Mammary epithelial cell (primary cell): ENCODE measurements at regions of chr1 and their contacts with region 1.

Region 1: DNA sequence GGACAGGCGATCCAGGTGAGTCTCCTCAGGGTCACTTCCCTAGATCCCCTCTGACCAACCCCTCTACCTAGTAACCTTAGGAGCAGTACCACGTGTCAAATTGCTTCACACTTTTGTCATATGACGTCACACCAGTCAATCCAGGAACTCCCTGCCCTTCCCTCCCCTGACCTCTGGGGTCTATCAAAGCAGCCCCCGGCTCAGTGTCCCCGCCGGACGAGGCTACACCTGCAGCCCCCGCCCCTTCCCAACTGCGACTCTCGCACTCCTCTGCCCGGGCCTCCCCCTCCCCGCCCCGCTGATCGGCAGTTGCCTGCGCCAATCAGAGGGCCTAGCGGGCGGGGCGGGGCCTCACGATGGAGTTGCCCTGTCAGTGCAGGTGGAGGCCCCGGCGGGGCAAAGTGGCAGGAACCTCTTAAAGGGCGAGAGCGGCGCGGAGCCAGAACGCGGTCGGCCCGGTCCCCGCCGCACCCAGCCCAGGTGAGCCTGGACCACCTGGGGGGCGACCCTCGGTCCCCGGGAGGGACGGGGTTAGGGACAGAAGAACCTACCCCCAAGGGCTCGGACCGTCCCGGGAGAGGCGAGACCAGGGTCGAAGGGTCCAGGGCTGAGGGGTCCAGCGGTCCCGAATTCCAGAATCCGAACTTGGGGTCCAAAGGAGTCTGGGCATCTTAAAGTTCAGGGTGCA is 27.5 kb upstream of the EPB41 start:
- DNase-seq: peak; percentile 86
- H3K4me3 ChIP-seq: peak overlapping the region; percentile 69 to 95 (median 78)
- H3K27ac ChIP-seq: peak overlapping the region; percentile 66
- H3K4me1 ChIP-seq: peaks cover 25% of the 10 kb centered on the region
- H3K27me3 ChIP-seq: no peaks in the 10 kb centered on the region
- CTCF ChIP-seq: no peak

Region 2: DNA sequence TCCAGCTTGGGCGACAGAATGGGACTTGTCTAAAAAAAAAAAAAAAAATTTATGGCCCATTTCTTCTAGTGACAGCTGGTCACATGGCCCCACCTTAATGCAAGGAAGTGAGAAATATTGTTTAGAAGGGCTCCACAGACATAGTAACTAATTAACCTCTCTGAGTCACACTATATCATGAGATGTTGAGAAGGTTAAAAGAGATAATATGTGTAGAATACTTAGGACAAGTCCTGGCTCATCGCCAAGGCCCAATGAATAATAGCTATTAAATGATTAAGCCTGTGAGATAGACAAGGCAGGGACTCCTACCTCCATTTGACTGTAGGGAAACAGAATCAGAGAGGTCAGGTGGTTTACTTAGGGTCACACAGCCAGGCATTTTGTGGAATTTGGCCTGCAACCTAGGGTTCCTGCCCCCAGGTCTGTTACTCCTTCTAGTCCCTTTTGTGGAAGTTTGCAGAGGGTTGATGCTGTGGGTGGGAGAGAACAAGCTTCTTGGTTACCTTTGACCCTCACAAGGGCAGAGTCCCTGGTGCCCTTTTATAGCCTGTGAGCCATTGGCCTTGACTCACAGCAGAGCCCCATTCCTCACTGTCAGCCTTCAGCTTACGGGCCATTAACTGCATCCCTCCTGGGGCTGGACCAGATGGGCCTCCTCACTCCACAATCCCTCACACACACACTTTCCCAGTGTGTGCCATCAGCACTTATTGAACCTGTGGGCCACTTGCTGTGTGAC is 26.4 kb before region 1 on chr1:
- CTCF ChIA-PET with region 1: no interaction called
- dilution Hi-C with region 1: no loop called
- in situ Hi-C with region 1: no loop called
- intact Hi-C with region 1: no loop called
- DNase-seq: peak; percentile 71
- H3K4me3 ChIP-seq: no peak overlapping the region
- H3K27ac ChIP-seq: no peak overlapping the region
- H3K4me1 ChIP-seq: no peaks in the 10 kb centered on the region
- H3K27me3 ChIP-seq: peaks cover 1% of the 10 kb centered on the region
- CTCF ChIP-seq: no peak

Region 3: GRCh38 chr1:28914228-28915030 is 27.6 kb after region 1 on chr1 and contains the start of gene EPB41:
- CTCF ChIA-PET with region 1: no interaction called
- dilution Hi-C with region 1: no loop called
- in situ Hi-C with region 1: no loop called
- intact Hi-C with region 1: loop called (anchors 1 kb)
- DNase-seq: peak; percentile 79
- H3K4me3 ChIP-seq: peak within 1 kb of the TSS; percentile 53 to 66 (median 64)
- H3K27ac ChIP-seq: peak within 1 kb of the TSS; percentile 38
- H3K4me1 ChIP-seq: peaks cover 6% of the 10 kb centered on the region
- H3K27me3 ChIP-seq: no peaks in the 10 kb centered on the region
- CTCF ChIP-seq: no peak
- total RNA-seq, gene EPB41: 20.6 to 23.7 TPM

Region 4: DNA sequence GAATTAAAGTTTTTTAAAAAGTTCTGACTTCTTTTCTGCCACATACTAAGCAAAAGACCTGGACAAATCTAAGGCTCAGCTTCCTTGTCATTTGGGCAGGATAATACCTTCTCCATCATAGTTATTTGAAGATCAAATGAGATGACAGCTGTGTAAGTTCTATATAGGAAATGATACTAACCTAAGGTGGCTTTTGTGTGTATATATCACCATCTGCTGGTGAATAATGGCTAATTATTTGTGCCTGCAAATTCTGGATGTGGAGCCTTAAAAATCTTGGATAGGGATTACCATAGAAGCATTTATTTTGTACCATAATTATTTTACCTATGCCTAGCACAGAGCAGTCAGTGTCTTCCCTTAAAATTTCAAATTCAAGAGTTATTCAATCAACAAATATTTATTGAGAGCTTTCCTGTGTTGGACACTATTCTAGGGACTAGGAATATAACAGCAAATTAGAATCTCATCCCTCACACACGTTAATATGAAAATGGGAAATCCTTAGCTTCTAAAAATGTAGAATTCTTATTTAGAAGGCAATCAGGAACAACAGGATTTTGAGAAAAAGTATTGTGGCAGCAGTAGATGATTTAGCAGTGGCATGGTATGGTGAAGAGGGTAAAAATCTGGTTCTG is 147.1 kb after region 1 on chr1:
- CTCF ChIA-PET with region 1: interaction called, 4 read pairs
- dilution Hi-C with region 1: no loop called
- in situ Hi-C with region 1: loop called (anchors 5 kb)
- intact Hi-C with region 1: loop called (anchors 1 kb)
- DNase-seq: peak; percentile 35
- H3K4me3 ChIP-seq: no peak overlapping the region
- H3K27ac ChIP-seq: no peak overlapping the region
- H3K4me1 ChIP-seq: no peaks in the 10 kb centered on the region
- H3K27me3 ChIP-seq: no peaks in the 10 kb centered on the region
- CTCF ChIP-seq: peak; percentile 58 to 65

Region 5: GRCh38 chr1:29197585-29197924 is 310.7 kb after region 1 on chr1:
- CTCF ChIA-PET with region 1: interaction called, 28 read pairs
- dilution Hi-C with region 1: no loop called
- in situ Hi-C with region 1: loop called (anchors 5 to 10 kb)
- intact Hi-C with region 1: loop called (anchors 1 kb)
- DNase-seq: peak; percentile 36
- H3K4me3 ChIP-seq: no peak overlapping the region
- H3K27ac ChIP-seq: no peak overlapping the region
- H3K4me1 ChIP-seq: peaks cover 26% of the 10 kb centered on the region
- H3K27me3 ChIP-seq: no peaks in the 10 kb centered on the region
- CTCF ChIP-seq: peak; percentile 66 to 71

Region 6: GRCh38 chr1:29245876-29246275 is 359.0 kb after region 1 on chr1:
- CTCF ChIA-PET with region 1: no interaction called
- dilution Hi-C with region 1: no loop called
- in situ Hi-C with region 1: no loop called
- intact Hi-C with region 1: no loop called
- DNase-seq: no peak
- H3K4me3 ChIP-seq: no peak overlapping the region
- H3K27ac ChIP-seq: no peak overlapping the region
- H3K4me1 ChIP-seq: peaks cover 35% of the 10 kb centered on the region
- H3K27me3 ChIP-seq: no peaks in the 10 kb centered on the region
- CTCF ChIP-seq: peak; percentile 60 to 73

Region 7: GRCh38 chr1:29310616-29311180 is 423.8 kb after region 1 on chr1:
- CTCF ChIA-PET with region 1: no interaction called
- dilution Hi-C with region 1: no loop called
- in situ Hi-C with region 1: no loop called
- intact Hi-C with region 1: no loop called
- DNase-seq: no peak
- H3K4me3 ChIP-seq: no peak overlapping the region
- H3K27ac ChIP-seq: no peak overlapping the region
- H3K4me1 ChIP-seq: no peaks in the 10 kb centered on the region
- H3K27me3 ChIP-seq: no peaks in the 10 kb centered on the region
- CTCF ChIP-seq: no peak